Activated CD4-positive, alpha-beta T cell treated with anti-CD3 and anti-CD28 coated beads, Interleukin-2, amount 10 ng/mL, durations not matched to agents 24 days and 14 days (primary cell): ENCODE measurements at regions of chr17 and their contacts with region 1.

Region 1: DNA sequence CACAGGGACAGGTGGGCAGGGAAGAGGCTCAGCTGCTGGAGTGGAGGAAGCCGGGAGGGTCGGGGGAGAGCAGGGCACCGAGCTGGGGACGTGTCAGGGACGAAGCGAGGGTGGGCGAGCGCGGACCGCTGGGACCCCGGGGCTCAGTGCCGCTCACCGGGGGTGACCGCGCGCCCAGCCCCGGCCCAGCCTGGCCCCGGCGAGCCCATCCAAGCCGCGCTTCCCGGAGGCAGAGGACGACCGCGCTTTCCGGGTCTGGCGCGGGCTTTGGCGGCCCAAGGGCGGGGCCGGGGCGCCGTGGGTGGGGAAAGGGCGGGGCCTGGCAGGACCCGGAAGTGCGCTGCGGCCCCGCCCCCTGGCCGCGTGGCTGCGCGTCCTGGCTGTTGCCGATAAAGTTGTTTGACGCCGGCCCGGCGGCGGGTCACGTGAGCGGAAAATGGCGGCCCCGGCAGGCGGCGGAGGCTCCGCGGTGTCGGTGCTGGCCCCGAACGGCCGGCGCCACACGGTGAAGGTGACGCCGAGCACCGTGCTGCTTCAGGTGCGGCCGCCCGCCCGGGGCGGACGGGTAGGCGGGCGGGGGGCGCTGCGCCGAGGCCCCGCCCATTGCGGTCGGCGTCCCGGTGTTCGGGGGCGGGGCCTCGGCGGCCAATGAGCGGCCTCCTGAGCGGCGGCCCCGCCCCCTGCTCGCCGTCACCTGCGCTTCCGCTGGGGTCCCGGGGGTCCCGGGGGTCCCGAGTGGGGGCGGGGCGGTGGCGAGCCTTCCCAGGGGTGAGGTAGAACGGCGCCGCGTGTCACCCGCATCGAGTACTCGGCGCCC is at the start of gene ASPSCR1:
- DNase-seq: peak; percentile 97
- H3K4me3 Mint-ChIP-seq: peak within 1 kb of the TSS; percentile 92
- H3K27ac Mint-ChIP-seq: peak within 1 kb of the TSS; percentile 98
- H3K4me1 Mint-ChIP-seq: peaks cover 33% of the 10 kb centered on the region
- H3K27me3 Mint-ChIP-seq: peaks cover 2% of the 10 kb centered on the region
- total RNA-seq, gene ASPSCR1: 35.1 and 37.3 TPM in 2 replicates

Region 2: GRCh38 chr17:82037113-82037888 is 59.9 kb after region 1 on chr17 and contains the start of gene DCXR:
- intact Hi-C with region 1: loop called (anchors 2 kb)
- DNase-seq: peak; percentile 99
- H3K4me3 Mint-ChIP-seq: peak within 1 kb of the TSS; percentile 83
- H3K27ac Mint-ChIP-seq: peak within 1 kb of the TSS; percentile 96
- H3K4me1 Mint-ChIP-seq: peaks cover 19% of the 10 kb centered on the region
- H3K27me3 Mint-ChIP-seq: peaks cover 2% of the 10 kb centered on the region
- total RNA-seq, gene DCXR: 128 TPM in 2 replicates